ENCODE measurements at regions of chr18 and their contacts with region 1.

Region 1: DNA sequence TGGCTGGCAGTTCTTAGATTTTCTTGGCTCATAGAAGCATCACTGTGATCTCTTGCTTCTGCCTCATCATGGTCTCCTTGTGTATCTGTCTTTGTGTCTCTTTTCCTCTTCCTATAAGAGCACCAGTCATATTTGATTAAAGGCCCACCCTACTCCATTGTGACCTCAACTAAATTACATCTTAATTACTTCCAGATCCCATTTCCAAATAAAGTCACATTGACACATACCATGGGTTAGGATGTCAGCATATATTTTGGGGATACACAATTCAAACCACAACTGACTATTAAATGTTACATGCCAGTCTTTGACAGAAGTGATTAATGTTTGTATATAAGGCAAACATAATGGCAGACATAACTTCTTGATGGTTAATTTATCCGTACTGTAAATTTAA is 27.3 kb upstream of the TMX3 start:
- DNase-seq: no peak
- ATAC-seq: no peak

Region 2: GRCh38 chr18:67864677-67865340 is 877.4 kb before region 1 on chr18:
- intact Hi-C with region 1: loop called (anchors 10 kb)
- DNase-seq: no peak
- ATAC-seq: no peak

Region 3: DNA sequence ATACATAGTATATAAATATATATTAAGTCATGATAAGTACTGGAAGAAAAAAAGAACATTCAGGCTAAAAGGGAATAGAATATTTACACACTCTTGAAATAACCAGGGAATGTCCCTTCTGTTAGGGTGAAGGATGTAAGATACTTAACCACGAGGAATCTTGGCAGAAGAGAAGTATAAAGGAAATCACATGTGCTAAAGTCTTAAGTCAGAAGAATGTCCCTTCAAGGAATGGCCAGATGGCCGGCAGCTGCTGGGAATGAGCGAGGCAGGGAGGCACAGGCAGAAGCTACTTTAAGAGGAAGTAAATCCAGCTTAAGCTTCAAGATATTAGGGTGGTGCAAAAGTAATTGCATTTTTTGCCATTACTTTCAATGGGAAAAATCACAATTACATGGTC is 61.1 kb after region 1 on chr18:
- intact Hi-C with region 1: no loop called
- DNase-seq: peak; percentile 87
- ATAC-seq: peak; percentile 99

Region 4: GRCh38 chr18:68840554-68841263 is 98.5 kb after region 1 on chr18:
- intact Hi-C with region 1: no loop called
- DNase-seq: no peak
- ATAC-seq: peak; percentile 47